ENCODE measurements at regions of chr6 and their contacts with region 1.

Region 1: GRCh38 chr6:15948930-15949900 is 179.7 kb upstream of the MYLIP start:
- DNase-seq: no peak
- ATAC-seq: peak in 1 of 2 donors; percentile 68

Region 2: DNA sequence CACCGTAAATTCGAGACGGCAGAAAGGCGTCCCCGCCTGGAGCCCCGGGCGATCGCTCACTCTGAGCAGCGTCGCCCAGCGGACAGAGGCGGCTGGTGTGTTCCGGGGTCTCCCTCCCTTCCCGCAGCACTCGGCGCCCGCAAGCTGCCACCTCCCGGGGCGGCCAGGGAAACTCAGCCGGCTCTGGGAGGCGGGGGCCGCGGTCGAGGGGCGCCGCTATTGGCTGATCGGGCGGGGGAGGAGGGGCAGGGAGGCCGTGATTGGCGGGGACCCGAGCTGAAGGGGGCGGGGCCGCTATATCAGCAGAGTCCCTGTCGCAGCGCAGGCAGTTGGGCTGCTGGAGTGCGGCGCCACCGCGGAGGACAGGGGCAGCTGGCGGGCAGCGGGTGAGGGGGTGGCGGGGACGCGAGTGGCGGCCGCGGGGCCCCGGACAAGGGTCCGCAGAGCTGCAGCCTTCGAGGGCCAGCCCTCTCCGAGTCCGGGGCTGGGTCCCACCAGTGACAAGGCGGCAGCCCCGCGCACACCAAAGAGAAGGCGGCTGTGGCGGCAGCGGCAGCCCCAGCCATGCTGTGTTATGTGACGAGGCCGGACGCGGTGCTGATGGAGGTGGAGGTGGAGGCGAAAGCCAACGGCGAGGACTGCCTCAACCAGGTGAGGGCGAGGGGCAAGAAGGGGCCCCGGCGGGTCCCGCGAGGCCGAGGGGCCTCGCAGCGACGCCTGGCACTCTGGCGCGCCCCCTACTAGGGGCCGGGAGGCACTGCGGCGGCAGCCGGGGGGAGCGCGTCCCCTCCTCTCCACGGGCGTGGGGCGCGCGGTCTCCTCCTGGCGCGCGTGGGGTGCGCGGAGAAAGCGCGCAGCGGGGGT is 179.8 kb after region 1 on chr6 and contains the start of gene MYLIP:
- intact Hi-C with region 1: loop called in 1 of 2 experiments (anchors 10 kb)
- DNase-seq: peak; percentile 98
- ATAC-seq: peak; percentile 97 to 98
- total RNA-seq, gene MYLIP: 11.3 to 24.0 TPM

Measured in left cardiac atrium (tissue), 4 donors.